ENCODE measurements at regions of chr12 and their contacts with region 1.

Region 1: GRCh38 chr12:46268590-46269558 is at the start of gene SLC38A1:
- DNase-seq: peak; percentile 94
- ATAC-seq: peak; percentile 61
- H3K4me3 Mint-ChIP-seq: no peak within 1 kb of the TSS
- H3K27ac Mint-ChIP-seq: no peak within 1 kb of the TSS
- H3K4me1 Mint-ChIP-seq: peaks cover 30% of the 10 kb centered on the region
- H3K27me3 Mint-ChIP-seq: no peaks in the 10 kb centered on the region
- total RNA-seq, gene SLC38A1: 167 to 180 TPM

Region 2: DNA sequence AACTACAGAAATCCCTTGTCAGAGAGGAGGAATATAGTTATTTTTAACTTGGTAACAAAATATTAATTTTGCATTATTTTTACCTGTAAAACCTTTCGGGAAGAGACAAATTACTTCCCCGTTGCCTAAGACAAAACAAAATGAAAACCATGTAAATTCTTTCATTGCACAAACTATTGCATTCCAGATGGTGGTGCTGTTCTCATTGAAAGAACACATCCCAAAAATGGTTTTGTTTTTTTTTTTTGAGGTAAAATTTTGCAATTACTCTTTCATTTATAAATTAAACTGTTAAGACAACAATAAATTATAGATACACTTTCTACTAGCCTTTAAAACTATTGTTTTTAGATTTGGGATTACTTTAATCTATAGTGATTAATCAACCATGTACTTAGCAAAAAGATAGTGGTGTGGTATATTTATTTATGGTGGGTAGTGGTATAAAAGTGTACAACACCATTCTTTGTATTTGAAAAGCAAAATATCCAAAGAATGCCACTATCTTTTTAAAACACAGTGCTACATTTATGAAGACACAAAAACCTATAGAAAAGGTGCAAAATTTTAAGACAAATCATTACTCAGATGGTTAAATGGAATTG is 115.5 kb before region 1 on chr12:
- CTCF ChIA-PET with region 1: interaction called, 10 read pairs
- POLR2A ChIA-PET with region 1: no interaction called
- intact Hi-C with region 1: loop called in 1 of 2 experiments (anchors 5 kb)
- DNase-seq: no peak
- ATAC-seq: no peak
- H3K4me3 Mint-ChIP-seq: no peak overlapping the region
- H3K27ac Mint-ChIP-seq: no peak overlapping the region
- H3K4me1 Mint-ChIP-seq: peaks cover 9% of the 10 kb centered on the region
- H3K27me3 Mint-ChIP-seq: peaks cover under 1% of the 10 kb centered on the region

Region 3: DNA sequence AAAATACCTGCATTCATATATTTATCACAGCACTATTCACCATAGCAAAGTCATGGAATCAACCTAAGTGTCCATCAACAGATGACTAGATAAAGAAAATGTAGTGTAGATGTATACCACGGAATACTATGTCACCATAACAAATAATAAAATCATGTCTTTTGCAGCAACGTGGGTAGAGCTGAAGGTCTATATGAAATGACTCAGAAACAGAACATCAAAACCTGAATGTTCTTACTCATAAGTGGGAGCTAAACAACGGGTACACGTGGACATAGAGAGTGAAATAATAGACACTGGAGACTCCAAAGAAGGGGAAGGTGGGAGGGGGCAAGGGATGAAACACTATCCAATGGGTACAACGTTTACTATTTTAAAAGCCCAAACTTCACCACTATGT is 37.9 kb before region 1 on chr12:
- CTCF ChIA-PET with region 1: no interaction called
- POLR2A ChIA-PET with region 1: interaction called, 3 read pairs
- intact Hi-C with region 1: loop called in 1 of 2 experiments (anchors 1 kb)
- DNase-seq: no peak
- ATAC-seq: peak; percentile 95
- H3K4me3 Mint-ChIP-seq: no peak overlapping the region
- H3K27ac Mint-ChIP-seq: no peak overlapping the region
- H3K4me1 Mint-ChIP-seq: peaks cover 63% of the 10 kb centered on the region
- H3K27me3 Mint-ChIP-seq: no peaks in the 10 kb centered on the region

Region 4: GRCh38 chr12:46546634-46547286 is 277.9 kb after region 1 on chr12:
- CTCF ChIA-PET with region 1: no interaction called
- POLR2A ChIA-PET with region 1: no interaction called
- intact Hi-C with region 1: loop called in 1 of 2 experiments (anchors 2 kb)
- DNase-seq: peak; percentile 45
- ATAC-seq: peak; percentile 33
- H3K4me3 Mint-ChIP-seq: no peak overlapping the region
- H3K27ac Mint-ChIP-seq: peak overlapping the region; percentile 58
- H3K4me1 Mint-ChIP-seq: peaks cover 58% of the 10 kb centered on the region
- H3K27me3 Mint-ChIP-seq: no peaks in the 10 kb centered on the region

Region 5: DNA sequence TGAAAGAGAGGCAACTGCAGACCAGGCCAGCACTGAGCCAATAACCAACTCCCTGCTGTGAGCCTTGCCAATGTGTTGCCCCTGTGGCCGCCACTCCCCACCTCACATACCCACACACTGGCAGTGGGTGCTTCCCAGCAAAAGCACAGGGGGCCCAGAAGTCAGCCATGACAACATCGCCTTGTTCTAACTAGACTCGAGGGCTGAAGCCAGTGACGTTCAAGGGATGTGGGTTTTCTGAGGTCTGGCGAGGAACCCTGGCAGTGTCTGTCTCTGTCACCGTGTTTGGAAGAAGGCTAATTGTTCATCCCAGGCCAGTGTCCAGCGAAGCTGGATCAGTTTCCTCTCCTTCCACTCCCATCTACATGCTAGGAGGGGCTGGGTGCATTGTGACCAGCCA is 1122.7 kb after region 1 on chr12:
- CTCF ChIA-PET with region 1: no interaction called
- POLR2A ChIA-PET with region 1: no interaction called
- intact Hi-C with region 1: loop called in 1 of 2 experiments (anchors 2 kb)
- DNase-seq: peak; percentile 84
- ATAC-seq: peak; percentile 48
- H3K4me3 Mint-ChIP-seq: peak overlapping the region; percentile 61
- H3K27ac Mint-ChIP-seq: peak overlapping the region; percentile 100
- H3K4me1 Mint-ChIP-seq: peaks cover 89% of the 10 kb centered on the region
- H3K27me3 Mint-ChIP-seq: no peaks in the 10 kb centered on the region

Measured in activated CD4-positive, alpha-beta T cell treated with anti-CD3 and anti-CD28 coated beads for 36 hours (primary cell).